Common myeloid progenitor, CD34-positive (primary cell): ENCODE measurements at regions of chr3 and their contacts with region 1.

Region 1: DNA sequence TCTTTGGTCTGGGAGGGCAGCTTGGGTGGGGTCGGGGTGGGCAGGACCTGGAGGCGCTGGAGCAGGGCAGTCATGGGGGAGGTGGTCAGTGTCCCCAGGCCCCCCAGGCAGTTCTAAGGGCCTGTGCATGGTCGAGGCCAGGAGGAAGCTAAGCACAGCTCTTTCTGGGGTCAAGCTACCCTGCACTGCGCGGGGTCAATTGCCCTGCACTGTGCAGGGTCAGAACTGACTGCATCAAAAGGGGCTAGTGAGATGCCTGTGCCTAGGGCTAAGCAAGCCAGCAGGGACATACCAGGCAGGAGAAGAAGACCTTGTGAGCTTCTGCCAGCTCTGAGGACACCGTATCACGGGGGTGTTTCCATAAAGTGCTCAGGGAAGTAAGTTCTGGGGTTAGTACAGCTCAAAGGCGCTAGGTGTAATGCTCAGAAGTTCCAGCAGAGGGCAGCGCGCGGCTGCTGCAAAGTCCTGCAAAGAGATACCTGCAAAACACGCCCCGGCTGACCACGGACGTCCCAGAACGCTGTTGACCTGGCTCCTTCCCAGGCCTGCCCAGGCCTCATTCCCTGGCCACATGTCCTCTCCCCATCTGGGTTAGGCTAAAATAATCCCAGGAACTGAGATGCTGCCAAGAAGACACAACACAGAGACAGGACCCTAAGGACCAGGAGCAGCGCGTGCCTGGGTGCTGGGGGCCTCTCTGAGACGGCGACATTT is 18.8 kb upstream of the IQSEC1 start:
- DNase-seq: peak; percentile 72 to 85 (median 76)
- H3K4me3 ChIP-seq: no peak overlapping the region
- H3K27ac ChIP-seq: no peak overlapping the region
- H3K4me1 ChIP-seq: peaks cover 0 to 33% (median 30%) of the 10 kb centered on the region in 4 experiments
- H3K27me3 ChIP-seq: no peaks in the 10 kb centered on the region

Region 2: DNA sequence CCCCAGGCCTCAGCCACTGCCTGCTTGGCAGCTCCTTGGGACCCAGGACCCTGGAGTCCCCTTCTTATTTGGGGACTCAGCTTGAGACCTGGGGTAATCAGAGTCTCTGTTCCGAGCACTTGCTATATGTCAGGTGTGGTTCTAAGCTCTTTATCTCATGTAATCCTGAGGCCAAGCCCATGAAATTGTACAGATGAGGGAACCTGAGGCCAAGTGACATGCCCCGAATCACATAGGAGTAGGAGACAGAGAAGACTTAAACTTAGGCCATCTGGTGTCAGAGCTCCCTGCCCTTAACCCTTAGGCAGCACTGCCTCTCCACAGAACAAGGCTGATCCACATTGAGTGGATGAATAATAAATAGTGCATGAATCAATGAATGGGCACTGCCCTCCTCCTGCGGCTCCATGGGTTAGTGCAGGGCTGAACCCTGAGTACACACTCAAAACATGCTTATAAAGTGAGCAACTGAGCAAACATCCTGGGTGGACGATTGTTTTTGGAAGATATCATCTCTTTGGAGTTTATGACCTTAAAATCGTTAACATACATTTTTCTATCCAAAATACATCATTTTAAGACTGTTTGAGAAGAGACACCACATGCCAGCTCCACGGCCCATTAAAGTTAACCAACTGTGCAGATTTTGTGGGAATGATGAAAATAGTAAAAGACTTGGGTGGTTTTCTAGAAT is 14.4 kb after region 1 on chr3:
- CTCF ChIA-PET with region 1: interaction called, 11 read pairs
- POLR2A ChIA-PET with region 1: no interaction called
- DNase-seq: no peak
- H3K4me3 ChIP-seq: no peak overlapping the region
- H3K27ac ChIP-seq: no peak overlapping the region
- H3K4me1 ChIP-seq: peaks cover 0 to 14% (median 11%) of the 10 kb centered on the region in 4 experiments
- H3K27me3 ChIP-seq: peaks cover 0 to 2% (median 0%) of the 10 kb centered on the region in 5 experiments

Region 3: DNA sequence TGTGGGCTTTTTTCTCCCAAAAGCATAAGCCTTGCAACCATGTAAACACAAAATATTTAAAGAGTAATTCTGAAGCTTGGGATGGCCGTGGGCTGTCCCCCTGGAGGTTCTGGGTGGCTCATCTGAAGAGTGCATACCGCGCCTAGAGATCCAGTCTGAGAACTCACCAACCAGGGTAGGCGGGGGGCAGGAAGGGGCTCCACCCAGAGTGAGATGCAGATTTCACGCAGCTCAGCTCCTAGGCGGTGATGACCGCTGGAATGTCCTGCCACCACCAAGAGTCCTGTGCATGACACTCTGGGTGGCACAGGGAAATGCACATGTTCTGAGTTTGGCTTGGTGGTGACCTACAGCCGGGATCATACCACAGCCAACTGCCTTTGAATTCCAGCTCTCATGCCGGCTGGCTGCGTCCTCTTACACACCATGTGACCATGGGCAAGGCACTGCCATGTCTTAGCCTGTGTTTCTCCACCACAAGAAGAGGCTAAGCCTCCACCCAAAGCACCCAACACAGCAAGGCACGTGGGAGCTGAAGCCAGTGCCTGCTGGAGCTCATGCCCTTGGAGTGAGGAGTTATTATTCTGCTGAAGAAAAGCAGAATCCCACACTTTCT is 106.3 kb after region 1 on chr3:
- CTCF ChIA-PET with region 1: interaction called, 13 read pairs
- POLR2A ChIA-PET with region 1: no interaction called
- DNase-seq: no peak
- H3K4me3 ChIP-seq: no peak overlapping the region
- H3K27ac ChIP-seq: no peak overlapping the region
- H3K4me1 ChIP-seq: peaks cover 8 to 36% (median 15%) of the 10 kb centered on the region in 4 experiments
- H3K27me3 ChIP-seq: peaks cover 0 to 23% (median 5%) of the 10 kb centered on the region in 5 experiments

Region 4: GRCh38 chr3:13461169-13462158 is 369.4 kb after region 1 on chr3:
- CTCF ChIA-PET with region 1: interaction called, 12 read pairs
- POLR2A ChIA-PET with region 1: no interaction called
- DNase-seq: peak; percentile 69 to 86 (median 82)
- H3K4me3 ChIP-seq: no peak overlapping the region
- H3K27ac ChIP-seq: no peak overlapping the region
- H3K4me1 ChIP-seq: no peaks in the 10 kb centered on the region
- H3K27me3 ChIP-seq: peaks cover 0 to 4% (median 0%) of the 10 kb centered on the region in 5 experiments